Mammary epithelial cell (primary cell): ENCODE measurements at regions of chr11 and their contacts with region 1.

Region 1: DNA sequence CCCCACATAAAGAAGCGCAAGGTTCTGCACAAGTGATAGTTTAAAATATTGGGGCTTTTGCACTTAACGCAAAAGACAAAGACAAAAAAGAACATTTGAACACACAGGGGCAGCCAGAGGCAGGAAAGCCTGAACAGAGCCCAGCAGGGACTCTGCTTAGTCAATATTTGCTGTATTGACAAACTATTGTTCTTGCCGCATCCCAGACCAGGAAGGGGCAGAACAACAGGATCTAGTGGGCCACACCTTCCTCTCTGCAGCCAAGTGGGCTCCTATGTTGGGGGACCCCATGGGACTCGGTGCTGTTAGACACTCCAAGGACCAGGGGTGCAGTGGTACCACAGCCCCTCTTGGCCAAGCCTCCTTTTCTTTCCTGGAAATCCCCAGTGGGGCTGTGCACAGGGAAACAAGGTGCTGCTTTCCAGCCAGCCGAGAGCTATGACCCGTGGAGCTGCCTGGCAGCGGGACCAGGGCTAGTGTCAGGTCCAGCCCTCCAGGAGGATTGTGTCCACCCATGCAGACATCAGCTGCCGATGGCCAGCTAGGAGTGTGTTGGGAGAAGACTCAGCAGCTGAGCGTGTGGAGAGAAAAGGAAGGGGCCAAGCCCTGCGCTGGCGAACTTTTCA is 43.3 kb upstream of the ANO1 start:
- DNase-seq: no peak
- H3K4me3 ChIP-seq: no peak overlapping the region
- H3K27ac ChIP-seq: no peak overlapping the region
- H3K4me1 ChIP-seq: no peaks in the 10 kb centered on the region
- H3K27me3 ChIP-seq: no peaks in the 10 kb centered on the region
- CTCF ChIP-seq: no peak

Region 2: DNA sequence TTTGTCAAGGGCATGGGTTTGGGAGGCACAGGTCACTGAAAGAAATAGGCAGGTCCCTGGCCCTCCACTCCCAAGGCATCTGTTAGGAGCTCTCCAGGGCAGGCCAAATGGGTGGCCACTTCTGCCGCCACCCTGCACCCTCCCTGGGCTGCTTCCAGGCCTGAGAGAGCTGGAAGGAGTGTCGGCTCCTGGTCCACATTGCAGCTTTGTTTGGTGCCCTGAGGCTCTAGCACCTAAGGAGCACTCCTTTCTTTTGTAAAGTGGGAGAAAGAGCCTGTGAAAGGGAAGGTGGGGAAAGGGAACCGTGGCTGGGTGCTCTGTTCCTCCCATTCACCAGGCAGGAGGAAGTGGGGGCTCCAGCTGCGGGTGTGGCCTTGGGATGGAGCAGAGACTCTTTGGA is 247.4 kb before region 1 on chr11:
- CTCF ChIA-PET with region 1: no interaction called
- dilution Hi-C with region 1: no loop called
- in situ Hi-C with region 1: no loop called
- intact Hi-C with region 1: no loop called
- DNase-seq: no peak
- H3K4me3 ChIP-seq: no peak overlapping the region
- H3K27ac ChIP-seq: no peak overlapping the region
- H3K4me1 ChIP-seq: peaks cover 10% of the 10 kb centered on the region
- H3K27me3 ChIP-seq: peaks cover 7% of the 10 kb centered on the region
- CTCF ChIP-seq: no peak

Region 3: DNA sequence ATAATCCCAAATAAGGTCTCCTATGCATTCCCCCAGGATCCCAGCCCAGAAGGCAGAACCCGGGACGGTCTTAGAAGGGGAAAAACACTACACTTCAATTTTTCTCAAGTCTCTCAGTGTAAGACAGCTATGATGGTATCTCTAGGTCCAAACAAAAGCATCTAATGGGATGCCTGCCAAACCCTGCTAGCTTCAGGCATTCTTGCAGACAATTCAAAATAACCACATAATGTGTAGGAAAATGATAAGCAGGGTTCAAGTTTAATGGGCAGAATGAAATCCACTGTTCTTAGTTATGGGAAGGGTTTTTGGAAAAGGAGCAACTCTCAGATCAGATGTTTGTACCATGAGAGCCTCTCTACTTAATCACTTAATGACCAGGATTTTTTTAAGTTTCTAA is 76.5 kb before region 1 on chr11:
- CTCF ChIA-PET with region 1: no interaction called
- dilution Hi-C with region 1: loop called (anchors 5 kb)
- in situ Hi-C with region 1: no loop called
- intact Hi-C with region 1: no loop called
- DNase-seq: peak; percentile 37
- H3K4me3 ChIP-seq: no peak overlapping the region
- H3K27ac ChIP-seq: no peak overlapping the region
- H3K4me1 ChIP-seq: peaks cover 20% of the 10 kb centered on the region
- H3K27me3 ChIP-seq: no peaks in the 10 kb centered on the region
- CTCF ChIP-seq: no peak